Activated naive CD4-positive, alpha-beta T cell treated with anti-CD3 and anti-CD28 coated beads for 36 hours (primary cell): ENCODE measurements at regions of chr7 and their contacts with region 1.

Region 1: GRCh38 chr7:44885394-44886317 is at the start of gene PURB:
- DNase-seq: peak; percentile 98
- H3K4me3 Mint-ChIP-seq: peak within 1 kb of the TSS; percentile 96
- H3K27ac Mint-ChIP-seq: peak within 1 kb of the TSS; percentile 100
- H3K4me1 Mint-ChIP-seq: peaks cover 46% of the 10 kb centered on the region
- H3K27me3 Mint-ChIP-seq: no peaks in the 10 kb centered on the region
- total RNA-seq, gene PURB: 12.9 to 13.1 TPM

Region 2: DNA sequence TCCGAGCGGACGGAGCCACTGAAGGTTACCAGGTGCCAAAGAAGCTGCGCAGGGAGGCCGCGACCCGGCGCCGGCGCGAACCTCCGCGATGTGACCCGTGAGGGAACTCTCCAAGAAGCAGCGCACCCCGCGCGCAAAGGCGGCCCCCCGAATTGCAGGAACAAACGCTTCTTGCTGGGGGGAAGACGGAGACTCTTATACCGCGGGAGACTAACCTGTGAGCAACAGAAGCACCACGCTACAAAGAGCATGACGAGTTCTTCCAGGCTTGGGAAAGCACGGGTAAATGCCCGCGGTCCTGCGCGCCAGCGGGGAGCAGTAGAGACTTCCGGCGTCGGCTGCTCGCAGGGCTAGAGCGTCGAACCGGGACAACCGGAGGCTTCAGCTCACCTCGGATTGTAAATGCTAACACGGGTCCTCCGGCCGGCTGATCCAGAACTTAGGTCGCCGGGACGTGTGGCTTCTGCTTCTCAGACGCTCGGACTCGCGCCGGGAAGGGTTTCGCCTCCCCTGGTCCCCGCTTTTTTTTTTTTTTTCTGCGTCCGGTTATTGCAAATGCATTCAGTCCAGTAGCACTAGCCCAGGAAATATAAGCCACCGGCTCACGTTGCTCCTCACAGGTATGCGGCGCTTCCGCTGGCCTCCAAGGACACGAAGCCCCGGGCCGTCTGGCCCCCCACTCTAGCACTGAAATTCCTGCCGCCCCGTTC is 1156.3 kb before region 1 on chr7 and contains the start of gene COA1:
- CTCF ChIA-PET with region 1: no interaction called
- intact Hi-C with region 1: loop called (anchors 5 kb)
- DNase-seq: peak; percentile 87
- H3K4me3 Mint-ChIP-seq: peak within 1 kb of the TSS; percentile 90
- H3K27ac Mint-ChIP-seq: peak within 1 kb of the TSS; percentile 89
- H3K4me1 Mint-ChIP-seq: peaks cover 35% of the 10 kb centered on the region
- H3K27me3 Mint-ChIP-seq: peaks cover 7% of the 10 kb centered on the region
- total RNA-seq, gene COA1: 85.9 to 87.2 TPM

Region 3: GRCh38 chr7:44477063-44477830 is 408.4 kb before region 1 on chr7:
- CTCF ChIA-PET with region 1: no interaction called
- intact Hi-C with region 1: no loop called
- DNase-seq: peak; percentile 70
- H3K4me3 Mint-ChIP-seq: no peak overlapping the region
- H3K27ac Mint-ChIP-seq: no peak overlapping the region
- H3K4me1 Mint-ChIP-seq: peaks cover 33% of the 10 kb centered on the region
- H3K27me3 Mint-ChIP-seq: no peaks in the 10 kb centered on the region

Region 4: GRCh38 chr7:44606450-44607254 is 279.0 kb before region 1 on chr7 and contains the start of gene OGDH:
- CTCF ChIA-PET with region 1: no interaction called
- intact Hi-C with region 1: loop called (anchors 1 kb)
- DNase-seq: peak; percentile 100
- H3K4me3 Mint-ChIP-seq: peak within 1 kb of the TSS; percentile 96
- H3K27ac Mint-ChIP-seq: peak within 1 kb of the TSS; percentile 97
- H3K4me1 Mint-ChIP-seq: peaks cover 31% of the 10 kb centered on the region
- H3K27me3 Mint-ChIP-seq: no peaks in the 10 kb centered on the region
- total RNA-seq, gene OGDH: 73.9 to 78.4 TPM

Region 5: DNA sequence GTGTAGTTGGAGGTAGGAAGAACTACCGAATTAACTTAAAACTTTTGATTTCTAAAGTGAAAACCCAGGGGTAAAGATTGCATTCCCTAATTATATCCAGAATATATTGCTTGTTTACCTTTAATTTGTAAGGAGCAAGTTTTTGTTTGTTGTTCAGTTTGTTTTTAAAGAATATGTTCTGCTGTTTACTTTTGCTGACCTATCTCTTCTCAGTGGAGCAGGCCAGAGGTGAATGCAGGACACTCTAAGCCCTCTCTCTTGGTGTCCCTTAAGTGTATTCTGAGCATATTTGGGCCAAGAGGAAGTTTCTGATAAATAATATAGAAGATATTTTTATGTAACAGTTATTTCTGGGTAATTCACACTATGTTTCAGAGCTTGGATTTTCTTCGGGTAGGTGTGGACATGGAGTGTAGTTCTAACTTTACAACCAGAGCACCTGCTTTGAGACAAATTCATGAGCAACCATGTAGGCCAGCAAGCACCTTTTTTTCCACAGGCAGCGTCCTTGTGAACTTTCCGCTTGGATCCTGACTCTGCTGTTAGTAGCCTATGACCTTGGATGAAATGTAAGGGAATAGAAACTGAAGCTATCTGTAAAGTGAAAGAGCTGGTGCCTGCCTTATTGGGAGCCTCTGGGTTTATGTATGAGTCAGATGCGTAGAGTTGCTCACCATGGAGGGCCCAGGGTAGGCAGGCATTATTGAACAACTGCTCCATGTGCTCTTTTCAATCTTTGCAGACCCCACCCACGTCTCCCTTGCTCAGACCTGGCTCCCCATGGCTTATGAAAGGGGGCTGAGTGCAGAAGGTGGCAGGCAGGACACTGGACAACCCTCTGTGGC is 263.1 kb before region 1 on chr7:
- CTCF ChIA-PET with region 1: no interaction called
- intact Hi-C with region 1: no loop called
- DNase-seq: peak; percentile 69
- H3K4me3 Mint-ChIP-seq: peak overlapping the region; percentile 39
- H3K27ac Mint-ChIP-seq: peak overlapping the region; percentile 76
- H3K4me1 Mint-ChIP-seq: peaks cover 72% of the 10 kb centered on the region
- H3K27me3 Mint-ChIP-seq: no peaks in the 10 kb centered on the region

Region 6: DNA sequence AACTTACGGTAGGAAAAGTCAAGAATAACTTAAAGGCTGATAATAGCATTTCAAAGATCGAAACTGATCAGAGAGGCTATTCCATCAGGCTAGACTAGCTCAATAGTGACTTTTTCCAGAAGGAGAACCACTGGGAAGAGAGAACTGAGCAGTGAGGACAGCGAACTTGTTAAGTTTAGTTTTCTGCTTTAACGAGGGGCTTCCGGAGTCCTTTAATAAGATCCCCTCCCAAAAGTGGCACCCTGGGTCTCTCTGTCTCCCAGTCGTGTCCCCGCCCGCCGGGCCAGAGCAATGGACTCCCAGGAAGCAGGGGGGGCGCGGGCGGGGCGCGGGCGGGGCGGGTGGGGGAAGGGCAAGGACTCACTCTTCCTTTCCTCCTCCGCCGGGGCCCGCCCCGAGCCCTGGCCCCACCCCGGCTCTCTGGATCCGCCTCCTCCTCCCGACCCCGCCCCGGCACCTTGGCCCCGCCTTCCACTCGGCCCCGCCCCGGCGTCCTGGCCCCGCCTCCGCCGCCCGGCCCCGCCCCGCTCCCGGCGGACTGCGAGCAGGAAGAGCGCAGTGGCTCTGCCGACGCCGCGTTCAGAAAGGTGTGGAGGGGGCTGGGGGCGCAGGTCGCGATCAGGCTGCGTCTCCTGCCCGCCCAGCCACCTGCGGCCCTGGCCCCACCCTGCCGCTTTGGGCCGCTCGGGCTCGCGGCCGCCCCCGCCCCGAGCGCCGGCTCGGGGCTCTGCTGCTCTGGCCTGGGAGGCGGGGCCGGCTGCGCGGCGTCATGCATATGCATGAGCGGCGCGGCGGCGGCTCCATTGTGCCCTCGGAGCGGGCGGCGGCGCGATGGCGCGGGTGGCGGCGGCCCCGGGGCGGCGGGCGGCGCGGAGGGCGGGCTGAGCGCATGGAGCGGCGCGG is 137.4 kb before region 1 on chr7 and contains the start of gene ZMIZ2:
- CTCF ChIA-PET with region 1: no interaction called
- intact Hi-C with region 1: loop called (anchors 1 kb)
- DNase-seq: peak; percentile 92
- H3K4me3 Mint-ChIP-seq: peak within 1 kb of the TSS; percentile 82
- H3K27ac Mint-ChIP-seq: peak within 1 kb of the TSS; percentile 88
- H3K4me1 Mint-ChIP-seq: peaks cover 39% of the 10 kb centered on the region
- H3K27me3 Mint-ChIP-seq: no peaks in the 10 kb centered on the region
- total RNA-seq, gene ZMIZ2: 83.1 to 86.5 TPM

Region 7: DNA sequence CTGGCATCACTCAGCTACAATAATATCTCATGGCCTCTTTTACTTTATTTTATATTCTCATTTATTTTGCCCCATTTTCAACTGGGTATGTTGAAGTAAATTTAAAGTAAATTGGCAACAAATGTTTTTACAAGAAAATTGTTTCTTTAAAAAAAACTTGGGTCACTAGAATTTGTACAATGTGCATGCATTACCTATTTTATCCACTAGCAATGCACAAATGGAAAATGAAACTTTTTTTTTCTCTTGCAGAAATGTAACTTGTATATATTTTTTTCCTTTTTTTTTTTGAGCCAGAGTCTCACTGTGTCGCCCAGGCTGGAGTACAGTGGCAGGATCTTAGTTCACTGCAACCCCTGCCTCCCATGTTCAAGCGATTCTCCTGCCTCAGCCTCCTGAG is 27.5 kb before region 1 on chr7:
- CTCF ChIA-PET with region 1: interaction called, 49 read pairs
- intact Hi-C with region 1: loop called (anchors 1 kb)
- DNase-seq: no peak
- H3K4me3 Mint-ChIP-seq: no peak overlapping the region
- H3K27ac Mint-ChIP-seq: no peak overlapping the region
- H3K4me1 Mint-ChIP-seq: peaks cover 23% of the 10 kb centered on the region
- H3K27me3 Mint-ChIP-seq: no peaks in the 10 kb centered on the region

Region 8: DNA sequence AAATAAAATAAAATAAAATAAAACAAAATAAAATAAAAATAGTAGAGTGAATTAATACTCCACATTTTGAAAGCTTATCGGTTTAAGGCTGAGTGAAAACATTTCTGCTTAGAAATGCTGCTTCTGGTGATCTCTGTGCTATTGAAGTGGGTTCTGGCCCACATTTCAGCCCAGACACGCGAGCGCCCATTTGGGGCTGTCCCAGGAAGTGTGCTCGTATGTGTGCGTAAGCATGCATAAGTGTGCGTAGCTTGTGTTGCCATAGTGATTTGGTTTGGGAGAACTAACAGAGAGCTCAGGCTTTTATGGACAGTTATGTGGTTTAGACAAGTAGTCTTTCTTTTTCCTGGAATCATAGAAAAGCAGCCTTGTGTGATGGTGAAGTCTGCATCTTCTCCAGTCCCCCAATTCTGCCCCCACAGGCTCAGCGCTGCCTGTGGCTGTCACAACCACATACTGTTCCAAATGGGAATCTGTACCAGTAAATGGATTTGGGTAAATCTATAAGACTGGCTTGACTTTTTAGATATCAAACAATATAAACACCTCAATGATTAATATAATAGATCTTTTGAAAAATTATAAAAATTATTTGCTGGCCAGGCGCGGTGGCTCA is 29.4 kb after region 1 on chr7:
- CTCF ChIA-PET with region 1: interaction called, 7 read pairs
- intact Hi-C with region 1: loop called (anchors 1 kb)
- DNase-seq: peak; percentile 88
- H3K4me3 Mint-ChIP-seq: no peak overlapping the region
- H3K27ac Mint-ChIP-seq: peak overlapping the region; percentile 83
- H3K4me1 Mint-ChIP-seq: peaks cover 17% of the 10 kb centered on the region
- H3K27me3 Mint-ChIP-seq: no peaks in the 10 kb centered on the region

Region 9: GRCh38 chr7:44985033-44985695 is 99.5 kb after region 1 on chr7:
- CTCF ChIA-PET with region 1: no interaction called
- intact Hi-C with region 1: no loop called
- DNase-seq: no peak
- H3K4me3 Mint-ChIP-seq: peak overlapping the region; percentile 99
- H3K27ac Mint-ChIP-seq: peak overlapping the region; percentile 99
- H3K4me1 Mint-ChIP-seq: peaks cover 56% of the 10 kb centered on the region
- H3K27me3 Mint-ChIP-seq: no peaks in the 10 kb centered on the region

Region 10: DNA sequence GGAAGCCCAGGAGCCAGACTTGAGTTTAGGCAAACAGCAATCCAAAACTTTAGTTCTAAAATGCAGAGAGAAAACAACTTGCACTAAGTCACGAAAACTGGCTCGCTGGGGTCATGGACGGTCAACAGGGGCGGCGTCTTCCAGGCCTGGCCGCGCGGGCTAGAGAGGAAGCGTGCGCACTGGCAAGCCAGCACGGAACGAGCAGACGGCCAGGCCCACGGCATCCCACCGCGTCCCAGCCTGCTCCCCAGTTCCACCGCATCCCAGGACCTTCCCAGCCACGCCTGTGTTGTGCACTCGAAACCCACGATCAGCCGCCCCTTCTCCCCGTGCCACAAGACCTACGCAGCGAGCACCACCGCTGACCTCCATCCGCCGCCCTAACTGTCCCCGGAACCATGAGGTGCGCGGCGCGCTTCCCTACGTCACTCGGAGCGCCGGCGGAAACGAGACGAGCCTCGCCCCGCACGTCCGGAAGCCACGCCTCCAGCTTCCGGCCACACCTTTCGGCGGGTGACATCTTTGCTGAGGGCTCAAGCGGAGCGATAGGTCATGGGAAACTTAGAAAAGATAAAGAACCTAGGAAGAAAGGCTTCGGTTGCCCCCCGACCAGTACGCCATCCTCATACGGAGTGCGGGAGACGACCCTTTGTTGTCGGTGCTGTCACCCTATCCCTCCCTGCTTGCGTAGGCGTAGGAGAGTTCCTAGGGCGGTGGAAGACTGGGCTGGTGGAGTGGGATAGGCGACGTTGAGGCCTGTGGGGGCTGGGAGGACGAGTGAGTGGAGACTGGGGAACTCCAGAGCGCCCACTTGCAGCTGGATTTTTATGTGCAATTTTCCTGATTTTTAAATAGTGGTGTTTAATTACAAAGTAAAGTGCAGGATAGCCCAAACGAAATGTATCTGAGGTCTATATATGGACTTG is 225.9 kb after region 1 on chr7 and contains the start of gene TBRG4:
- CTCF ChIA-PET with region 1: no interaction called
- intact Hi-C with region 1: loop called (anchors 1 kb)
- DNase-seq: peak; percentile 96
- H3K4me3 Mint-ChIP-seq: peak within 1 kb of the TSS; percentile 85
- H3K27ac Mint-ChIP-seq: peak within 1 kb of the TSS; percentile 89
- H3K4me1 Mint-ChIP-seq: peaks cover 40% of the 10 kb centered on the region
- H3K27me3 Mint-ChIP-seq: no peaks in the 10 kb centered on the region
- total RNA-seq, gene TBRG4: 127 to 136 TPM